ENCODE measurements at regions of chrX and their contacts with region 1.

Region 1: GRCh38 chrX:107776649-107777535 is 641 bp upstream of the NCBP2L start:
- DNase-seq: peak; percentile 73
- H3K4me3 Mint-ChIP-seq: peak overlapping the region; percentile 72
- H3K27ac Mint-ChIP-seq: peak overlapping the region; percentile 42
- H3K4me1 Mint-ChIP-seq: peaks cover 20% of the 10 kb centered on the region
- H3K27me3 Mint-ChIP-seq: no peaks in the 10 kb centered on the region
- CTCF ChIP-seq: peak; percentile 61

Region 2: GRCh38 chrX:107627838-107628661 is 148.8 kb before region 1 on chrX and contains the start of gene PRPS1:
- CTCF ChIA-PET with region 1: interaction called, 10 read pairs
- intact Hi-C with region 1: no loop called
- DNase-seq: peak; percentile 90
- H3K4me3 Mint-ChIP-seq: peak within 1 kb of the TSS; percentile 86
- H3K27ac Mint-ChIP-seq: peak within 1 kb of the TSS; percentile 78
- H3K4me1 Mint-ChIP-seq: peaks cover 10% of the 10 kb centered on the region
- H3K27me3 Mint-ChIP-seq: no peaks in the 10 kb centered on the region
- CTCF ChIP-seq: no peak
- total RNA-seq, gene PRPS1: 62.5 and 72.5 TPM in 2 replicates

Region 3: DNA sequence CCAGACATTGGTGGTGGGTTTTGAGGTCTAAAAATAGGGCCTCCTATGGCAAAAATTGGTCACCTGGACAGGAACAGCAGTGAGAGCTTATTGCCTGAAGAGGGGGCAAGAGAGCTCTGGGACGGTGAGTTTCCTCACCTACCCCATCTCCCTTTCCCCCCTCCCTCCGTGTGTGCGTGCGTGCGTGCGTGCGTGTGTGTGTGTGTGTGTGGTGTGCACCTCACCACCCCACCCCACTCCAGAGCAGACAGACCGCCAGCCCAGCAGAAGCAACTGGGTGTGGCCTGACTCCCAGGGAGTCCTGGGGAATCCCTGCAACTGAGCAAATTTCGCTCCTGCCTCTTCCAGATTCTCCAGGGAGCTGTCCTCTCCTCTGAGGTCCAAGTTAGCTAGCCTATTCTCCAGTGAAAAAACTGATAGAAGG is 103.9 kb before region 1 on chrX:
- CTCF ChIA-PET with region 1: interaction called, 51 read pairs
- intact Hi-C with region 1: loop called (anchors 2 kb)
- DNase-seq: peak; percentile 76
- H3K4me3 Mint-ChIP-seq: no peak overlapping the region
- H3K27ac Mint-ChIP-seq: peak overlapping the region; percentile 63
- H3K4me1 Mint-ChIP-seq: peaks cover 36% of the 10 kb centered on the region
- H3K27me3 Mint-ChIP-seq: no peaks in the 10 kb centered on the region
- CTCF ChIP-seq: peak; percentile 80

Region 4: GRCh38 chrX:107731831-107732502 is 44.9 kb before region 1 on chrX:
- CTCF ChIA-PET with region 1: interaction called, 4 read pairs
- intact Hi-C with region 1: loop called (anchors 5 kb)
- DNase-seq: peak; percentile 87
- H3K4me3 Mint-ChIP-seq: no peak overlapping the region
- H3K27ac Mint-ChIP-seq: peak overlapping the region; percentile 84
- H3K4me1 Mint-ChIP-seq: peaks cover 37% of the 10 kb centered on the region
- H3K27me3 Mint-ChIP-seq: no peaks in the 10 kb centered on the region
- CTCF ChIP-seq: no peak

Region 5: GRCh38 chrX:107742700-107743191 is 34.1 kb before region 1 on chrX:
- CTCF ChIA-PET with region 1: no interaction called
- intact Hi-C with region 1: no loop called
- DNase-seq: no peak
- H3K4me3 Mint-ChIP-seq: peak overlapping the region; percentile 49
- H3K27ac Mint-ChIP-seq: no peak overlapping the region
- H3K4me1 Mint-ChIP-seq: peaks cover 22% of the 10 kb centered on the region
- H3K27me3 Mint-ChIP-seq: no peaks in the 10 kb centered on the region
- CTCF ChIP-seq: no peak

Region 6: GRCh38 chrX:107818900-107819521 is 42.1 kb after region 1 on chrX:
- CTCF ChIA-PET with region 1: no interaction called
- intact Hi-C with region 1: no loop called
- DNase-seq: no peak
- H3K4me3 Mint-ChIP-seq: no peak overlapping the region
- H3K27ac Mint-ChIP-seq: no peak overlapping the region
- H3K4me1 Mint-ChIP-seq: peaks cover 9% of the 10 kb centered on the region
- H3K27me3 Mint-ChIP-seq: peaks cover under 1% of the 10 kb centered on the region
- CTCF ChIP-seq: no peak

Measured in Calu3 (cell line).